CD14-positive monocyte (primary cell): ENCODE measurements at regions of chr7 and their contacts with region 1.

Region 1: DNA sequence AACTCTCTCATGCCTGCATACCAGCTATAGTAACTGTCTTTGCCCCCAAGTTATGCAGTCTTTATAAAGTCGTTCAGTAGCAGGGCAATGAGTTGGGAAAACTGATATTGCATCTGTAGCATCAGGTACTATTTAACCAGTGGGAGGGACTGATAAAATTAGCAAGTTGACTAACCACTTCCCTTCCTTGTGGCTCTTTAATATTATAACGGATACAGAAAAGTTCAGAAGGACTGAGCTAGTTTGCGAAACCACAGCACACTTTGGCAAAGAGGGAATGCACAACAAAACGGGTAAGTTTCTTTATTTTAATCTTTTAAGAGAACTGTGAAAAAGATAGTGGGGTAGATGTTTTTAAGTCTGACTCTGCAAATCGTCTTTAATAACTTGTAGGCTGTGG is 205.3 kb upstream of the HDAC9 start:
- DNase-seq: peak in 2 of 3 donors; percentile 42 to 46
- H3K4me3 ChIP-seq: peak overlapping the region; percentile 53 to 98 (median 82)
- H3K4me3 Mint-ChIP-seq: peak overlapping the region; percentile 77 to 86
- H3K27ac ChIP-seq: peak overlapping the region in 1 of 2 donors; percentile 82
- H3K27ac Mint-ChIP-seq: peak overlapping the region; percentile 76 to 91 (median 87)
- H3K4me1 ChIP-seq: peaks cover 66 to 69% of the 10 kb centered on the region in 2 donors
- H3K4me1 Mint-ChIP-seq: peaks cover 62% of the 10 kb centered on the region
- H3K27me3 ChIP-seq: no peaks in the 10 kb centered on the region
- H3K27me3 Mint-ChIP-seq: peaks cover 0 to 1% (median 0%) of the 10 kb centered on the region in 3 donors
- CTCF ChIP-seq: no peak

Region 2: DNA sequence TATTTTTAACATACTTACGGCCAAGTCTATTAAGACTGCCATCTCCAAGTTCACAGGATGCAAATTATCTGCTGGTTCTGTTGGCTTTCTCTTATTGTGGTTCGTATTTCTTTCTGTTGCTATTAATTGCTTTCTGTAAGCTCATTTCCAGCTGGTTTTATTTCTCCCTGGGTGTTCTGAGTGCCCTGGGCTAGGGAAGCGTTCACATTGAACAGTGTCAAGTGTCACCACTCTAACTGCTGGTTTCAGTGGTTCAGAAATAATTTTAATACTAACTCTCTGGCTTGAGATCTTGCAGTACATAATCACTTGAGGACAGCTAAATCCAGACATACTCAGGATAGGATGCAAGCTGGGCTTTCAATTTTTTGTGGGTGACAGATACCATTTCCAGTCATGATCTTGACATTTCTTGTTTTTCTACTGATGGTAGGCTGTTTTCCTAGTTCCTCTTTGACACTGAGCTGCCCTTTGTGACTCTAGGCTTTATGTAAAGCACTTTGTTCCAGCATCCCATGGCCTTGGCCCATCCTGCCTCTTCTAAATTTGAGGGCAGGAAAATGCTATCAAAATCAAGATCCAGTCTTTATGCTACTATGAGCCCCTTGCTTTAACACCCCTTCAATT is 467.6 kb before region 1 on chr7:
- intact Hi-C with region 1: no loop called
- DNase-seq: no peak
- H3K4me3 ChIP-seq: no peak overlapping the region
- H3K4me3 Mint-ChIP-seq: no peak overlapping the region
- H3K27ac ChIP-seq: no peak overlapping the region
- H3K27ac Mint-ChIP-seq: peak overlapping the region in 1 of 7 donors; percentile 10
- H3K4me1 ChIP-seq: no peaks in the 10 kb centered on the region
- H3K4me1 Mint-ChIP-seq: no peaks in the 10 kb centered on the region
- H3K27me3 ChIP-seq: no peaks in the 10 kb centered on the region
- H3K27me3 Mint-ChIP-seq: no peaks in the 10 kb centered on the region
- CTCF ChIP-seq: no peak

Region 3: GRCh38 chr7:18225067-18225466 is 65.2 kb before region 1 on chr7:
- intact Hi-C with region 1: loop called in 1 of 2 experiments (anchors 5 kb)
- DNase-seq: peak; percentile 27 to 54 (median 30)
- H3K4me3 ChIP-seq: peak overlapping the region in 2 of 3 experiments; percentile 16 to 56
- H3K4me3 Mint-ChIP-seq: peak overlapping the region in 1 of 2 donors; percentile 74
- H3K27ac ChIP-seq: peak overlapping the region; percentile 43 to 81
- H3K27ac Mint-ChIP-seq: peak overlapping the region; percentile 64 to 92 (median 89)
- H3K4me1 ChIP-seq: peaks cover 46 to 72% of the 10 kb centered on the region in 2 donors
- H3K4me1 Mint-ChIP-seq: peaks cover 68% of the 10 kb centered on the region
- H3K27me3 ChIP-seq: no peaks in the 10 kb centered on the region
- H3K27me3 Mint-ChIP-seq: peaks cover 0 to 2% (median 0%) of the 10 kb centered on the region in 3 donors
- CTCF ChIP-seq: no peak

Region 4: DNA sequence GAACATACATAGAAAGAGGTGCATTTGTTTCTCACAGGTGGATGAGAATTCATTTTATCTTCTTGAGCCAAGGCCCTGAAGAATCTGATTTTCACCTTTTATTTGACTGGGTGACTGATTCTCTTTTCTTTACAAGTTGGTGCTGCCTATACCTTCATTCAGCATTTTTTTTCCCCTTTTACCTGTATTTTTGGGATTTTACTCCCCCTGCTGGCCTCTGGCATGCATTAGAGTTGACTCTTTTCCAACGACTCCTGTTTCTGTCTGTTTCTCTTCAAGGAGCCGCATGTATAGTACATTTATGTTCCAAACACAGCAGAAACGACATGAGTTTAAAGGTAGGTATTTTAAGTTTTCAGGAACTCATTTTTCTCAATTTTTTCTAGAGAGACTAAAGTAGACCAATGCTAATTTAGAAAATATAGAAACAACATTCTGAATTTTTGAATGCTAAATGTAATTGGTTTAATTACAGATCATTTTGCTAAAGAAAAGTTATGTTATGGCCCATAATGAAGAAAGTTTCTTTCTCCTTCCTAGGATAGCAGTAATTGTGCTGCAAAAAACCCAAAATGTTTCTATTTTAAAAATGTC is 55.5 kb after region 1 on chr7:
- intact Hi-C with region 1: loop called in 1 of 2 experiments (anchors 10 kb)
- DNase-seq: peak; percentile 17 to 55 (median 45)
- H3K4me3 ChIP-seq: no peak overlapping the region
- H3K4me3 Mint-ChIP-seq: no peak overlapping the region
- H3K27ac ChIP-seq: peak overlapping the region in 1 of 2 donors; percentile 20
- H3K27ac Mint-ChIP-seq: peak overlapping the region in 1 of 7 donors; percentile 12
- H3K4me1 ChIP-seq: peaks cover 10 to 15% of the 10 kb centered on the region in 2 donors
- H3K4me1 Mint-ChIP-seq: peaks cover 25% of the 10 kb centered on the region
- H3K27me3 ChIP-seq: no peaks in the 10 kb centered on the region
- H3K27me3 Mint-ChIP-seq: peaks cover 0 to 2% (median 0%) of the 10 kb centered on the region in 3 donors
- CTCF ChIP-seq: peak; percentile 91

Region 5: GRCh38 chr7:18408461-18408860 is 118.2 kb after region 1 on chr7:
- intact Hi-C with region 1: no loop called
- DNase-seq: no peak
- H3K4me3 ChIP-seq: no peak overlapping the region
- H3K4me3 Mint-ChIP-seq: no peak overlapping the region
- H3K27ac ChIP-seq: no peak overlapping the region
- H3K27ac Mint-ChIP-seq: no peak overlapping the region
- H3K4me1 ChIP-seq: peaks cover 10 to 12% of the 10 kb centered on the region in 2 donors
- H3K4me1 Mint-ChIP-seq: peaks cover 12% of the 10 kb centered on the region
- H3K27me3 ChIP-seq: no peaks in the 10 kb centered on the region
- H3K27me3 Mint-ChIP-seq: no peaks in the 10 kb centered on the region
- CTCF ChIP-seq: no peak

Region 6: DNA sequence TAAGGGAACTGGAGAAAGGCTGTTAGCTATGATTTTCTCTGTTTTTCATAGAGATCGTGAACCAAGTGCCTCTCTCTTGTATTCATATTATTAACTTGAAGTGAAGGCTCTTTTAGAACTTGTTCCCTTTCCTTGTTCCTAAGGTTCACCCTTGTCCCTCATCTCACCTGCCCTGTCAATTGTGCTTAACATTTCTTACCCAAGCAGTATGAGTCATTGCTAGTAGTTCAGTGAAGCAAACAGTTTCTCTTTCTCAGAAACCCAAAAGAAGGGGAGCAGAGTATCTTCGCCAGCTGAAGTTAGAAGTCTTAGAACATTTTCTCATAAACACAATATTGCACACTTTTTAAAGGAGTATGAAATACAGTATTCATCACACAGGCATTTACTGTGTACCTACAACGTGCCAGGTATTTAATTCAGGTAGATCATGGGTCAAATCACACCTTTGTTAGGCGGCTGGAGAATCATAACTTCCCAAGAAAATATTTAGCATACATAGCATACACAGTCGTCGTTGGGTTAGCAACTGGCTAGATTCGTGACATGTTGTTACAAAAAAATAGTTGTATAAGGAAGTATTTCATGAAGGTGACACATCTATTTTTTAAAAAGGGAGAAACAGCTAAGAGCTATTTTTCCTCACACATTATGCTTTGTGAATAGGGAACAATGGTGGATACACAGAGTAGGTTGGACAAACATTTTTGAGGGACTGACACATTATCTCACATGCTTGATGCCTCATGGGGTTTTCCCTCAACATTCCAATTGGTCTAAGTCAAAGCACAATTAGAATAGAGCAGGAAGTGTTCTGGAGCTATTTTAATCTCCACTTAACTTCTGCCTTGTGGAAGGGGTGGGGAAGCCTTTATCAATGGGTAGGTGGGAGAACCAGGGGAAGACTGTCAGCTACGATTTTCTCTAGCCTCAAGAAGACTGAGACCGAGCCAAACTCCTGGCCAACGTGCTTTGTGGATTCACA is 218.5 kb after region 1 on chr7:
- intact Hi-C with region 1: no loop called
- DNase-seq: peak; percentile 25 to 86 (median 48)
- H3K4me3 ChIP-seq: no peak overlapping the region
- H3K4me3 Mint-ChIP-seq: no peak overlapping the region
- H3K27ac ChIP-seq: peak overlapping the region in 1 of 2 donors; percentile 71
- H3K27ac Mint-ChIP-seq: peak overlapping the region in 6 of 7 donors; percentile 19 to 81 (median 70)
- H3K4me1 ChIP-seq: peaks cover 6% of the 10 kb centered on the region in 2 donors
- H3K4me1 Mint-ChIP-seq: peaks cover 23% of the 10 kb centered on the region
- H3K27me3 ChIP-seq: no peaks in the 10 kb centered on the region
- H3K27me3 Mint-ChIP-seq: no peaks in the 10 kb centered on the region
- CTCF ChIP-seq: no peak

Region 7: GRCh38 chr7:18541181-18541870 is 251.1 kb after region 1 on chr7:
- intact Hi-C with region 1: no loop called
- DNase-seq: no peak
- H3K4me3 ChIP-seq: no peak overlapping the region
- H3K4me3 Mint-ChIP-seq: no peak overlapping the region
- H3K27ac ChIP-seq: no peak overlapping the region
- H3K27ac Mint-ChIP-seq: peak overlapping the region in 1 of 7 donors; percentile 54
- H3K4me1 ChIP-seq: no peaks in the 10 kb centered on the region
- H3K4me1 Mint-ChIP-seq: peaks cover 4% of the 10 kb centered on the region
- H3K27me3 ChIP-seq: no peaks in the 10 kb centered on the region
- H3K27me3 Mint-ChIP-seq: no peaks in the 10 kb centered on the region
- CTCF ChIP-seq: no peak